Left cardiac atrium (tissue), 4 donors: ENCODE measurements at regions of chr12 and their contacts with region 1.

Region 1: GRCh38 chr12:3150931-3151835 is 74.0 kb downstream of the TSPAN9 start:
- DNase-seq: no peak
- ATAC-seq: peak; percentile 6 to 39

Region 2: DNA sequence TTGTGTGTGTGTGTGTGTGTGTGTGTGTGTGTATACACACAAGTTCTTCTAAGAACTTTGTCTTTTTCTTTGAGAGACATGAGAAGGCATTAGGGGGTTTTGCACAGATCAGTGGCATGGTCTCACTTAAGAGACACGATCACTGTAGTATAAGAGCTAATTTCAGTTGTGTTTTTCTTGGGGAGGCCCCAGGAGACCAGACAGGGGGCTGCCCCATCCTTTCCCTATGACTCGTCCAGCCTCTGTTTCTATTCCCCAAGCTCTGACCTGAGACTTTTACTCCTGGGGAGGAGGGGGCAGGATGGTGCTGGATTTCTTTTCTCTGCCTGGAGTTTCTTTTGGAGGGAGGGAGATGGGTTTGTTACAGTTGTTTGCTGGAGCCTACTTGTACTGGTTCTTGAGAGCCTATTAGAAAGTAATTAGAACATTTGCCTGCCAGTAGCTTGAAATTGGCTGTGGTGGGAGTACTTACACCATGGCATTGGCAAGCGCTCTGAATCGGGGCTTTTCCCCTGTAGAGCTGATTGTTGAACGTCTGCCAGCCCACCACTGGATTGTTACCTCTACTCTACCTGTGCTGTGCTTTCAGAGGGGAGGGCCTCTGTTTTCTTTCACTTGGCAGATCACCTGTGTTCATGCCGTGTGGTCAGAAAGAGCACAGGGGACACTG is 35.5 kb after region 1 on chr12:
- intact Hi-C with region 1: loop called in 1 of 2 experiments (anchors 5 kb)
- DNase-seq: no peak
- ATAC-seq: no peak

Region 3: GRCh38 chr12:3554371-3555115 is 403.4 kb after region 1 on chr12:
- intact Hi-C with region 1: no loop called
- DNase-seq: no peak
- ATAC-seq: no peak